Heart left ventricle (tissue), 16 donors: ENCODE measurements at regions of chr20 and their contacts with region 1.

Region 1: GRCh38 chr20:24992487-24993205 is at the start of gene APMAP:
- DNase-seq: peak; percentile 96 to 98 (median 97)
- ATAC-seq: peak; percentile 89 to 97 (median 96)
- H3K4me3 ChIP-seq: peak within 1 kb of the TSS; percentile 63 to 98 (median 78)
- H3K27ac ChIP-seq: peak within 1 kb of the TSS; percentile 81 to 99 (median 94)
- H3K4me1 ChIP-seq: peaks cover 0 to 60% (median 31%) of the 10 kb centered on the region in 12 donors
- H3K27me3 ChIP-seq: no peaks in the 10 kb centered on the region
- CTCF ChIP-seq: peak in 1 of 12 donors; percentile 4
- POLR2A ChIP-seq: peak; percentile 49 to 96
- total RNA-seq, gene APMAP: 22.6 to 61.3 (median 31.9) TPM

Region 2: DNA sequence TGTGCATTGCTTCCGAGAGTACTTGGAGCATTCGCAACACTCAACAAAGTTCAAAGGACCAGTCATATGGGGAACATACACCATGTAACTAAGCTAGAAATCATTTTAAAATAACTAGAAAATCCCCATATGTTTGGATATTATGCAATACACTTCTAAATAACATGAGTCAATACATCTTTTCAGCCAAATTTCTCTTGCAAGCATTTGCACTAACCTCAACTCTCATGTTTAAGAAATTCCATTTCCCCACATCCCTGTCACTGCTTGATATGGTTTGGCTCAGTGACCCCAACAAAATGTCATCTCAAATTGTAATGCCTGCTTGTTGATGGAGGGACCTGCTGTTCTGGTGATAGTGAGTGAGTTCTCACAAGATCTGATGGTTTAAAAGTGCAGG is 129.3 kb before region 1 on chr20:
- intact Hi-C with region 1: no loop called
- DNase-seq: no peak
- ATAC-seq: no peak
- H3K4me3 ChIP-seq: no peak overlapping the region
- H3K27ac ChIP-seq: no peak overlapping the region
- H3K4me1 ChIP-seq: no peaks in the 10 kb centered on the region
- H3K27me3 ChIP-seq: no peaks in the 10 kb centered on the region
- CTCF ChIP-seq: no peak
- POLR2A ChIP-seq: no peak

Region 3: GRCh38 chr20:24917797-24918578 is 74.7 kb before region 1 on chr20:
- intact Hi-C with region 1: no loop called
- DNase-seq: peak; percentile 58 to 82 (median 66)
- ATAC-seq: peak; percentile 47 to 91 (median 86)
- H3K4me3 ChIP-seq: peak overlapping the region in 2 of 12 donors; percentile 3 to 12
- H3K27ac ChIP-seq: no peak overlapping the region
- H3K4me1 ChIP-seq: peaks cover 0 to 10% (median 2%) of the 10 kb centered on the region in 12 donors
- H3K27me3 ChIP-seq: peaks cover 0 to 4% (median 0%) of the 10 kb centered on the region in 9 donors
- CTCF ChIP-seq: peak; percentile 69 to 89 (median 80)
- POLR2A ChIP-seq: no peak

Region 4: GRCh38 chr20:25032478-25033280 is 40.0 kb after region 1 on chr20:
- intact Hi-C with region 1: loop called in 6 of 10 experiments (anchors 2 to 5 kb)
- DNase-seq: peak in 4 of 5 donors; percentile 64 to 76 (median 72)
- ATAC-seq: peak; percentile 43 to 86 (median 72)
- H3K4me3 ChIP-seq: peak overlapping the region in 7 of 12 donors; percentile 11 to 35 (median 16)
- H3K27ac ChIP-seq: peak overlapping the region; percentile 53 to 88 (median 76)
- H3K4me1 ChIP-seq: peaks cover 19 to 77% (median 65%) of the 10 kb centered on the region in 12 donors
- H3K27me3 ChIP-seq: no peaks in the 10 kb centered on the region
- CTCF ChIP-seq: peak in 3 of 12 donors; percentile 13 to 40 (median 29)
- POLR2A ChIP-seq: no peak

Region 5: GRCh38 chr20:25057234-25058050 is 64.8 kb after region 1 on chr20:
- intact Hi-C with region 1: loop called in 1 of 10 experiments (anchors 2 kb)
- DNase-seq: peak; percentile 85 to 90 (median 86)
- ATAC-seq: peak; percentile 56 to 84 (median 80)
- H3K4me3 ChIP-seq: peak overlapping the region; percentile 65 to 96 (median 88)
- H3K27ac ChIP-seq: peak overlapping the region; percentile 91 to 100 (median 97)
- H3K4me1 ChIP-seq: peaks cover 29 to 62% (median 49%) of the 10 kb centered on the region in 12 donors
- H3K27me3 ChIP-seq: no peaks in the 10 kb centered on the region
- CTCF ChIP-seq: peak in 1 of 12 donors; percentile 14
- POLR2A ChIP-seq: peak in 1 of 2 donors; percentile 56

Region 6: GRCh38 chr20:25178563-25179438 is 186.2 kb after region 1 on chr20:
- intact Hi-C with region 1: loop called (anchors 1 to 5 kb)
- DNase-seq: no peak
- ATAC-seq: peak; percentile 67 to 90 (median 82)
- H3K4me3 ChIP-seq: no peak overlapping the region
- H3K27ac ChIP-seq: no peak overlapping the region
- H3K4me1 ChIP-seq: peaks cover 0 to 6% (median 0%) of the 10 kb centered on the region in 12 donors
- H3K27me3 ChIP-seq: no peaks in the 10 kb centered on the region
- CTCF ChIP-seq: peak; percentile 54 to 80 (median 70)
- POLR2A ChIP-seq: no peak

Region 7: GRCh38 chr20:25247956-25248785 is 255.5 kb after region 1 on chr20 and contains the start of gene PYGB:
- intact Hi-C with region 1: loop called in 5 of 10 experiments (anchors 1 to 10 kb)
- DNase-seq: peak; percentile 79 to 89 (median 83)
- ATAC-seq: peak; percentile 33 to 91 (median 76)
- H3K4me3 ChIP-seq: peak within 1 kb of the TSS; percentile 72 to 99 (median 92)
- H3K27ac ChIP-seq: peak within 1 kb of the TSS; percentile 86 to 99 (median 96)
- H3K4me1 ChIP-seq: peaks cover 0 to 61% (median 34%) of the 10 kb centered on the region in 12 donors
- H3K27me3 ChIP-seq: no peaks in the 10 kb centered on the region
- CTCF ChIP-seq: no peak
- POLR2A ChIP-seq: peak; percentile 79 to 97
- total RNA-seq, gene PYGB: 172 to 450 (median 233) TPM

Region 8: GRCh38 chr20:25294459-25295385 is 302.1 kb after region 1 on chr20:
- intact Hi-C with region 1: loop called in 2 of 10 experiments (anchors 10 kb)
- DNase-seq: peak in 3 of 5 donors; percentile 56 to 65 (median 64)
- ATAC-seq: peak; percentile 11 to 46 (median 25)
- H3K4me3 ChIP-seq: no peak overlapping the region
- H3K27ac ChIP-seq: peak overlapping the region; percentile 11 to 85 (median 76)
- H3K4me1 ChIP-seq: peaks cover 9 to 76% (median 37%) of the 10 kb centered on the region in 12 donors
- H3K27me3 ChIP-seq: no peaks in the 10 kb centered on the region
- CTCF ChIP-seq: peak; percentile 41 to 78 (median 61)
- POLR2A ChIP-seq: no peak

Region 9: DNA sequence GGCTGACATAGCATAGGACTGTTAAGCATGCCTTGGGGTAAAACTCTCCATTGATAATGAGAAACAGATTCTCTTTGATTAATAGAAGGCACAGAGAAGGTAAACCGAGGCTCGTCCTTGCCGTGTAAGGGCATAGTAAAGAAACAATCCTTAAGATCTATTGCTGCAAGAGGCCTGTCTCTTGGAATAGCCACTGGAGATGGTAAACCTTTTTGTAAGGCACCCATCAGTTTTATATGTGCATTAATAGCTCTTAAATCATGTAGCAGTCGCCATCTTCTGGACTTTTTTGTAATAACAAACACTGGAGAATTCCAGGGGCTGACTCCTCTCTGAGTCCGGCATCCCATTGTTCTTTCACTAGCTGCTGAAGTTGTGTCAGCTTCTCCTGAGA is 406.4 kb after region 1 on chr20:
- intact Hi-C with region 1: loop called in 8 of 10 experiments (anchors 2 to 10 kb)
- DNase-seq: peak in 1 of 5 donors; percentile 29
- ATAC-seq: peak in 3 of 4 donors; percentile 84 to 88 (median 86)
- H3K4me3 ChIP-seq: no peak overlapping the region
- H3K27ac ChIP-seq: no peak overlapping the region
- H3K4me1 ChIP-seq: peaks cover 0 to 8% (median 0%) of the 10 kb centered on the region in 12 donors
- H3K27me3 ChIP-seq: no peaks in the 10 kb centered on the region
- CTCF ChIP-seq: peak; percentile 45 to 75 (median 63)
- POLR2A ChIP-seq: no peak